SK-N-SH (cell line): ENCODE measurements at regions of chr2 and their contacts with region 1.

Region 1: GRCh38 chr2:237858294-237859081 is 935 bp upstream of the RAMP1 start:
- DNase-seq: peak; percentile 86
- H3K4me3 ChIP-seq: peak overlapping the region in 1 of 2 experiments; percentile 55; a peak in 1 of 4 replicates
- H3K27ac ChIP-seq: peak overlapping the region in 1 of 2 experiments; percentile 94; a peak in 2 of 4 replicates
- H3K4me1 ChIP-seq: peaks cover 0 to 38% of the 10 kb centered on the region in 2 experiments; a peak in 2 of 4 replicates
- H3K27me3 ChIP-seq: no peaks in the 10 kb centered on the region
- CTCF ChIP-seq: peak; percentile 81
- EP300 ChIP-seq: no peak
- RAD21 ChIP-seq: peak; percentile 99

Region 2: DNA sequence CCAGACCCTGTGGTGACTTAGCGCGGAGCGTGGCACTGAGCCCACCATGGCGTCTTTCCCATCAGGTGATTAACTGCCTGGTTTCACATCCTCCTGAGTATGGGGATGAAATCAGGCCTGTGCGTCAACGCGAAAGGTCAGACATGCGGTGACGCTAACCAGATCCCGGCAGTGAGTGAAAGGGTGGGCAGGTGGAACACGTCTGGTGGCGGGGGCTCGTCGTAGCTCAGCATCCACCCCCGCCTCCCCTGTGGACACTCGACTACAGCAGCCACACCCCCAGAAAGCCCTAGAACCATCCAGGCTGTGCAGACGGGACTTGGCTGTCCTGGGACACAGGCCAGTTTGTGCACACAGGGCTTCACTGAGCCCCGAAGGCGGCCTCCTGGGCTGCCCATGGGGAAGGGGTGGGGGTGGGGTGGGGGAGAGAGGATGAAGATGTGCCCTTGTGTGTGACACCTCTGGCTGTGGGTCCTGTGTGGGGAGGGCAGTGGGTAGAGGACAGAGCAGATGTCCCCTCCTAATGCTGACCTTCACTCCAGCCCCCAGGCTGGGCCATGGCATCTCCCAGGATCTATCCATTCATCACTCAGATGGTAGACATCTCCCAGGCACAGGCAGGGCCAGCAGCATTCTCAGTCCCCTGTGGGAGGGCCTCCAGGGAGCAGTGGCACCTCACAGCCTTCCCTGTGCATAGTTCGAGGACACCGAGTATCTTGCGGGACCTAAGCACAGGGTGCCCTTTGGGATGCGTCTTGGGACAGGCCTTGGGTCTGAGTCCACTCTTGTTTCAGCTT is 28.4 kb after region 1 on chr2:
- CTCF ChIA-PET with region 1: interaction called, 58 read pairs
- POLR2A ChIA-PET with region 1: interaction called, 24 read pairs
- DNase-seq: peak; percentile 86
- H3K4me3 ChIP-seq: no peak overlapping the region
- H3K27ac ChIP-seq: peak overlapping the region in 1 of 2 experiments; percentile 99; a peak in 2 of 4 replicates
- H3K4me1 ChIP-seq: peaks cover 0 to 58% of the 10 kb centered on the region in 2 experiments; a peak in 1 of 4 replicates
- H3K27me3 ChIP-seq: no peaks in the 10 kb centered on the region
- CTCF ChIP-seq: no peak
- EP300 ChIP-seq: peak; percentile 9 to 98; a peak in 3 of 4 replicates
- RAD21 ChIP-seq: peak; percentile 16

Region 3: DNA sequence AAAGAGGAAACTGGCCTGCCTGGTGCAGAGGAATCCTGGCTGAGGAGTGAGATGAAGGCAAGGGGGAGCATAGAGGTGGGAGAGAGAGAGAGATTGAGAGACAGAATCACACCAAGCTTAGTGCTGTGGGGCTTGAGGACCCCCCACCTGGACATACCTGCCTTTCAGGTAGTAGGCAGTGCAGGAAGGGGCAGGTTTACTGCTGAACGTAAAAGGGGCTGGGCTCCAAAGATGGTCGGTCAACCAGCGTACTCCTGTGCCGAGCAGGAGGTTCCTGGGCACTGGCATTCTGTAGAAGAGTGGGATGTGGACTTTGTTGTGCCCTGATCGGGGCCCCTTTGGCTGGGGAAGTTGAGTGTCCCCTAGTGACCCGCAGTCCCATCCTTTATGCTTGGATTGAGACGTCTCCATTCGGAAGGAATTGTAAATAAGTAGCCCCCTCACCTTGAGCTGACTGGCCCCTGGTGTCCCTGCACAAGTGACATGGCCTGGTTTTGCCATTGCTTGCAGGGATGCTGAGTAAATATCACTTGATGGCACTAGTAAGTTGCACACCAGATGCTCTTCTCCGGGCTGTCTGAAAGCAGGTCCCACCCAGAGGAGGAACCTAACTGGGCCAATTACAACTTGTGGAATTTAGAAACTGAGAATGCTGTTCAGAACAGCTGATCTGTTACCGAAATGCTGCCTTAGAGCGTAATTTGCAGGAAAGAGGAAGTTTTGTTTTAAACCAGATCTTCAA is 109.8 kb after region 1 on chr2:
- CTCF ChIA-PET with region 1: interaction called, 12 read pairs
- POLR2A ChIA-PET with region 1: interaction called, 3 read pairs
- DNase-seq: peak; percentile 59
- H3K4me3 ChIP-seq: peak overlapping the region; percentile 83 to 86
- H3K27ac ChIP-seq: peak overlapping the region in 1 of 2 experiments; percentile 68; a peak in 1 of 4 replicates
- H3K4me1 ChIP-seq: peaks cover 7 to 31% of the 10 kb centered on the region in 2 experiments; a peak in 3 of 4 replicates
- H3K27me3 ChIP-seq: no peaks in the 10 kb centered on the region
- CTCF ChIP-seq: no peak
- EP300 ChIP-seq: no peak
- RAD21 ChIP-seq: peak; percentile 63

Region 4: GRCh38 chr2:238053191-238053776 is 194.8 kb after region 1 on chr2:
- CTCF ChIA-PET with region 1: interaction called, 11 read pairs
- POLR2A ChIA-PET with region 1: no interaction called
- DNase-seq: no peak
- H3K4me3 ChIP-seq: no peak overlapping the region
- H3K27ac ChIP-seq: no peak overlapping the region
- H3K4me1 ChIP-seq: no peaks in the 10 kb centered on the region
- H3K27me3 ChIP-seq: no peaks in the 10 kb centered on the region
- CTCF ChIP-seq: no peak
- EP300 ChIP-seq: no peak
- RAD21 ChIP-seq: no peak

Region 5: GRCh38 chr2:238256594-238257104 is 398.2 kb after region 1 on chr2:
- CTCF ChIA-PET with region 1: interaction called, 19 read pairs
- POLR2A ChIA-PET with region 1: no interaction called
- DNase-seq: peak; percentile 95
- H3K4me3 ChIP-seq: no peak overlapping the region; a peak in 1 of 4 replicates
- H3K27ac ChIP-seq: no peak overlapping the region; a peak in 1 of 4 replicates
- H3K4me1 ChIP-seq: peaks cover 0 to 21% of the 10 kb centered on the region in 2 experiments; a peak in 1 of 4 replicates
- H3K27me3 ChIP-seq: no peaks in the 10 kb centered on the region
- CTCF ChIP-seq: peak; percentile 96
- EP300 ChIP-seq: peak in 1 of 2 experiments; percentile 6; a peak in 1 of 4 replicates
- RAD21 ChIP-seq: peak; percentile 82